Panc1 (cell line): ENCODE measurements at regions of chr3 and their contacts with region 1.

Region 1: GRCh38 chr3:12556671-12557472 is at the start of gene MKRN2:
- DNase-seq: peak; percentile 54
- ATAC-seq: peak; percentile 96
- H3K4me3 ChIP-seq: peak within 1 kb of the TSS; percentile 88 to 89
- H3K27ac ChIP-seq: peak within 1 kb of the TSS; percentile 82
- H3K4me1 ChIP-seq: peaks cover 30% of the 10 kb centered on the region
- H3K27me3 ChIP-seq: no peaks in the 10 kb centered on the region
- CTCF ChIP-seq: no peak
- total RNA-seq, gene MKRN2: 19.4 TPM

Region 2: DNA sequence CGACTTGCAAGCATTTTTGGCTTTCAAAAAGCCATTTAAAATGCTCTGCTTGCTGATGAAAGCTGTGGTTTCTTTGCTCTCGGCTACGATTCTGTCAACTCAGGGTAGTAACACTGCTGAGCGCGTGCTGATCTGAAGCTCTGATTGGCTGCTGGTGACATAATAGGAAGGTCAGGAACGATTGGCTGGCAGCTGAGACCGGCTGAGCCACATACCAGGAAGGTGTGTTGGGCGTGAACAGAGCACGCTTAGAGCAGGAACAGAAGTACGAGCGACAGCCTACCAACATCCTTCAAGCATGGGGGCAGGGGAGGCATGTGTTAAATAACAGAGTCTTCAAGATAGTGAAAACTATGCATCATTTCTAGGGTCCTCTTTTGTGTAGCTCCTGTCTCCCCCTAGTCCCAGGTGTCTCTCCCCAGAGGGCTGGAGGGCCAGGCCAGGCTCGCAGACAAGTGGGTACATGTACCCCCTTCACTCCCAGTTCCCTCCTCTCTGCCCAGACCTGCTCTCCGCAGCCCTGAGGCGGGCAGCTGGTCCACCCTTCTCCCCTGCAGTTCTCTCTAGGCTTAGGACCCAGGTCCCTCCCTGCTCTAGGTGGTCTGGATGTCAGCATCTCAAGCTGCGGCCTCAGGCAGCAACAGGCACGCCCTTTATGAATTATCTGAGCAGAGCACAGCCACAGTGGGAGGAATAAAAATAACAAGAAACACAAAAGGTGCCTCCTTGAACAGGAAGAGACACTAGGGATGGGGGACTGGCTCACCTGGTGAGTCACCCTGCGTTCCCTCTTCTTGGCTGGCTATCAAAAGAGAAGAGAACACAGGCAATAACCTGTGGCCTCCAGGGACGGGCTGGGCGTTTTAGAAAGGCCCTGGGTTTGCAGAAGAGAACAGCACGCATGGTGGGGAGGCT is 786.1 kb before region 1 on chr3:
- CTCF ChIA-PET with region 1: no interaction called
- POLR2A ChIA-PET with region 1: no interaction called
- in situ Hi-C with region 1: no loop called
- intact Hi-C with region 1: no loop called
- DNase-seq: no peak
- ATAC-seq: peak; percentile 82
- H3K4me3 ChIP-seq: peak overlapping the region in 1 of 2 experiments; percentile 18; a peak in 1 of 4 replicates
- H3K27ac ChIP-seq: no peak overlapping the region
- H3K4me1 ChIP-seq: no peaks in the 10 kb centered on the region
- H3K27me3 ChIP-seq: no peaks in the 10 kb centered on the region
- CTCF ChIP-seq: no peak

Region 3: GRCh38 chr3:12313528-12313927 is 243.3 kb before region 1 on chr3:
- CTCF ChIA-PET with region 1: interaction called, 11 read pairs
- POLR2A ChIA-PET with region 1: no interaction called
- in situ Hi-C with region 1: no loop called
- intact Hi-C with region 1: no loop called
- DNase-seq: no peak
- ATAC-seq: no peak
- H3K4me3 ChIP-seq: no peak overlapping the region
- H3K27ac ChIP-seq: peak overlapping the region; percentile 64; the same call in 1 of the 2 replicates
- H3K4me1 ChIP-seq: peaks cover 67% of the 10 kb centered on the region
- H3K27me3 ChIP-seq: no peaks in the 10 kb centered on the region
- CTCF ChIP-seq: peak; percentile 34; the same call in 1 of the 2 replicates

Region 4: DNA sequence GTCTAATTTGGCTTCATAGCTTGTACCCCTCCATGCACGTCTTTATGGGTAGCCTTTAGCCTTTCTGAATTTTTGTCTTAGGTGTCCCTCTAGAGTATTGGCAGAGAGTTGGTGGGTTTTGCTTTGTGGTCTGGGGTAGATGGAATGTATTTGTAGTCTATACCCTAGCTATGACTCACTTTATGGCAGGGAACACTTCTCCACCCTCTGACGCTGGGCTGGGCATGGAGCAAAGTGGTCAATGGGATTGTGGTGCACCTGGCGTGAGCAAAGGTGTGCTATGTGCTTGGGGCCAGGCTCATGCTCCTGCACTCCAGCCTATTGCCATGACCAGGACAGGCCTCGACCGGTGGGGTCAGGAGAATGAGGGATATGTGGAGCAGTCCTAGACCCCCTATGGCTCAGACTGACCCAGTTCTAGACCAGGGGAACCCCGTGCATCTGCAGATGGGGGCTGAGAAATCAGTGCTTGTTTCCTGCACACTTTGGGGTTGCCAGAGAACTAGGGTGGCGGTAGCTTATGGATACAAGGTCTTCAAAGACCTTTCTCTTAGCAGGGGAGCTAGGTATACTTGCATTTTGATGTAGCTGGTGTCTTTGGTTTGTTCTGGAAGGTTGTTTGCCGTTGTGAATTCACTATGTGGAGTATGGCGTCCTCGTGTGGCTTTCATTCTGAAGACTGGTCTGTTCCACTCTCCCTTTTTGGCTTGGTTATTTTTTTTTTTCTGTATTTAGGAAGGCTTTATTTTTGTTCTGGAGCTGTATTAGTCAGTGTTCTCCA is 333.9 kb after region 1 on chr3:
- CTCF ChIA-PET with region 1: interaction called, 10 read pairs
- POLR2A ChIA-PET with region 1: no interaction called
- in situ Hi-C with region 1: no loop called
- intact Hi-C with region 1: no loop called
- DNase-seq: no peak
- ATAC-seq: no peak
- H3K4me3 ChIP-seq: no peak overlapping the region
- H3K27ac ChIP-seq: no peak overlapping the region
- H3K4me1 ChIP-seq: no peaks in the 10 kb centered on the region
- H3K27me3 ChIP-seq: no peaks in the 10 kb centered on the region; the same call in 1 of the 2 replicates
- CTCF ChIP-seq: peak; percentile 7; the same call in 1 of the 2 replicates